ENCODE measurements at regions of chr5 and their contacts with region 1.

Region 1: GRCh38 chr5:54944364-54944763 is 41.0 kb downstream of the ESM1 start:
- DNase-seq: no peak
- ATAC-seq: peak; percentile 61; the same call in 2 of the 3 replicates
- H3K4me3 ChIP-seq: no peak overlapping the region
- H3K27ac ChIP-seq: no peak overlapping the region
- H3K4me1 ChIP-seq: no peaks in the 10 kb centered on the region
- H3K27me3 ChIP-seq: no peaks in the 10 kb centered on the region; a peak in 1 of 4 replicates
- CTCF ChIP-seq: peak; percentile 49 to 59 (median 49)
- EP300 ChIP-seq: no peak
- POLR2A ChIP-seq: no peak
- RAD21 ChIP-seq: no peak

Region 2: DNA sequence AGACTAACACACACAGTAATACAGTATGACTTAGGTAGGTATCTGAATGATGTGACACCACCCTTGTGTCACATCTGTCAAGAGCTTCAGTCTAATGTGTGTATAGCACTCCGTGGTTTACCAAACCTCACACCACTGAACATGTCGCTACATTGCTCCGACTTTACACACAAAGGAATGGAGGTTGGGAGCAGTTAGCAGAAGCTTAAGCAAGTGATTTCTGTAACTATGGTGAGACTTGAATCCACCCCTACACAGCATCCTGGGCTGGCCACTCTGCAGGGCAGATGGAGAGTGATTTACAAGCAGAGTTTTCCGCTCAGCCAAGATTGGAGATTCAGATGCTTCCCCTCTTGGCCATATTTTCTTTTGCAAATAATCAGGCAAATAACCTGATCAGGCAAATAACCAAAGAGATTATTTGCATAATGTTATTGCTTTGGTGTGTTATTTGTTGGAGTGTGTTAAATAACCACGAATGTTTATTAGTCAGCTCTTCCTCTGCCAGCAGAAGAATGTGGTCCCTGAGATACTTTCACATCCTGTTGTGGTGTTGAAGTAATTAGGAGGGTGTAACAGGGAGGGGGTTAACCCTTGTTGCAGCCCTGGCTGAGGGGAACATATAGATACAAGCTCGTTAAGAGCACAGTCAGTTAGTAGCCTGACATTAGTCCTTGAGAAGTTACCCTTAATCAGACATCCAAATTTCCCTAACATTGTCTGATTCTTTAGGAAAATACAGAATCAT is 334.0 kb before region 1 on chr5:
- CTCF ChIA-PET with region 1: no interaction called
- POLR2A ChIA-PET with region 1: no interaction called
- RAD21 ChIA-PET with region 1: no interaction called
- SMC1A ChIA-PET with region 1: no interaction called
- in situ Hi-C with region 1: no loop called
- intact Hi-C with region 1: no loop called
- DNase-seq: peak; percentile 51
- ATAC-seq: peak; percentile 99
- H3K4me3 ChIP-seq: no peak overlapping the region
- H3K27ac ChIP-seq: no peak overlapping the region
- H3K4me1 ChIP-seq: peaks cover 6% of the 10 kb centered on the region
- H3K27me3 ChIP-seq: 0 out of 4 replicates have a peak, but pooled peaks cover 0 to 2% of the 10 kb centered on the region in 2 experiments
- CTCF ChIP-seq: no peak
- EP300 ChIP-seq: peak in 1 of 2 experiments; percentile 78; a peak in 2 of 4 replicates
- POLR2A ChIP-seq: no peak
- RAD21 ChIP-seq: no peak

Region 3: GRCh38 chr5:54930736-54931135 is 13.6 kb before region 1 on chr5:
- CTCF ChIA-PET with region 1: interaction called, 12 read pairs
- POLR2A ChIA-PET with region 1: no interaction called
- RAD21 ChIA-PET with region 1: no interaction called
- SMC1A ChIA-PET with region 1: no interaction called
- in situ Hi-C with region 1: no loop called
- intact Hi-C with region 1: no loop called
- DNase-seq: no peak
- ATAC-seq: no peak
- H3K4me3 ChIP-seq: no peak overlapping the region
- H3K27ac ChIP-seq: no peak overlapping the region
- H3K4me1 ChIP-seq: no peaks in the 10 kb centered on the region
- H3K27me3 ChIP-seq: no peaks in the 10 kb centered on the region; a peak in 1 of 4 replicates
- CTCF ChIP-seq: no peak
- EP300 ChIP-seq: no peak
- POLR2A ChIP-seq: no peak
- RAD21 ChIP-seq: no peak

Region 4: GRCh38 chr5:54959673-54960418 is 15.5 kb after region 1 on chr5:
- CTCF ChIA-PET with region 1: interaction called, 22 read pairs
- POLR2A ChIA-PET with region 1: no interaction called
- RAD21 ChIA-PET with region 1: interaction called, 4 read pairs
- SMC1A ChIA-PET with region 1: interaction called, 3 read pairs
- in situ Hi-C with region 1: no loop called
- intact Hi-C with region 1: no loop called
- DNase-seq: no peak
- ATAC-seq: no peak
- H3K4me3 ChIP-seq: no peak overlapping the region
- H3K27ac ChIP-seq: no peak overlapping the region
- H3K4me1 ChIP-seq: no peaks in the 10 kb centered on the region
- H3K27me3 ChIP-seq: no peaks in the 10 kb centered on the region; a peak in 1 of 4 replicates
- CTCF ChIP-seq: peak in 2 of 3 experiments; percentile 25 to 27; a peak in 3 of 6 replicates
- EP300 ChIP-seq: no peak
- POLR2A ChIP-seq: no peak
- RAD21 ChIP-seq: no peak

Region 5: DNA sequence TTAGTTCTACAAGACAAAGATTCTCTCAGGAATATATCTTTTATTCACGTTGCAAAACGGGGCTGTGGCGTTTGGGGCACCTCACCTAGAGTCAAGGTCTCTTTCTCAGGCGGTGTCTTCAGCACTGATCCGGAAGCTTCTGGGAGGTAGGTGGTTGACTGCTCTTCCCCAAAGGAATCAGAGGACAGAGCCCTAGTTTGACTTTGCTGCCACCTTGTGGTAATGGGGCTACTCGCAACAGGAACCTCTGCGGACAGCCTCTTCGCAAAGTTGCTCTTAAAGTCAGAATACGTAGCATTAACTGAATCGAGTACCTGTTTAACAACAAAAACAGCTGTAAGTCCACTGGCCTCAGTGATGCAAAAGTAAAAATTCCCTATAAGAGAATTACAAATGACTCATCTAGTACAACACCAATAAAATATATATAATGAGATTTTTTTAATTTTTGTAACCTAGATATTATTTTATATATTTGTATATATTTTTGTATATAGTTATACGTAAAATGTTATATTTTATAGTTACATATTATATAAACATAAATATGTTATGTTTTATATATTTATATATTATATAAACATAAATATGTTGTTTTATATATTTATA is 202.3 kb after region 1 on chr5:
- CTCF ChIA-PET with region 1: interaction called, 38 read pairs
- POLR2A ChIA-PET with region 1: no interaction called
- RAD21 ChIA-PET with region 1: interaction called, 7 read pairs
- SMC1A ChIA-PET with region 1: interaction called, 13 read pairs
- in situ Hi-C with region 1: no loop called
- intact Hi-C with region 1: loop called (anchors 1 kb)
- DNase-seq: peak; percentile 31
- ATAC-seq: peak; percentile 97
- H3K4me3 ChIP-seq: no peak overlapping the region
- H3K27ac ChIP-seq: no peak overlapping the region
- H3K4me1 ChIP-seq: no peaks in the 10 kb centered on the region
- H3K27me3 ChIP-seq: 0 out of 4 replicates have a peak, but pooled peaks cover 0 to 2% of the 10 kb centered on the region in 2 experiments
- CTCF ChIP-seq: peak; percentile 88 to 94 (median 92)
- EP300 ChIP-seq: no peak
- POLR2A ChIP-seq: no peak
- RAD21 ChIP-seq: peak; percentile 92

Measured in GM12878 (cell line).